Heart right ventricle (tissue), 16 donors: ENCODE measurements at regions of chr9 and their contacts with region 1.

Region 1: DNA sequence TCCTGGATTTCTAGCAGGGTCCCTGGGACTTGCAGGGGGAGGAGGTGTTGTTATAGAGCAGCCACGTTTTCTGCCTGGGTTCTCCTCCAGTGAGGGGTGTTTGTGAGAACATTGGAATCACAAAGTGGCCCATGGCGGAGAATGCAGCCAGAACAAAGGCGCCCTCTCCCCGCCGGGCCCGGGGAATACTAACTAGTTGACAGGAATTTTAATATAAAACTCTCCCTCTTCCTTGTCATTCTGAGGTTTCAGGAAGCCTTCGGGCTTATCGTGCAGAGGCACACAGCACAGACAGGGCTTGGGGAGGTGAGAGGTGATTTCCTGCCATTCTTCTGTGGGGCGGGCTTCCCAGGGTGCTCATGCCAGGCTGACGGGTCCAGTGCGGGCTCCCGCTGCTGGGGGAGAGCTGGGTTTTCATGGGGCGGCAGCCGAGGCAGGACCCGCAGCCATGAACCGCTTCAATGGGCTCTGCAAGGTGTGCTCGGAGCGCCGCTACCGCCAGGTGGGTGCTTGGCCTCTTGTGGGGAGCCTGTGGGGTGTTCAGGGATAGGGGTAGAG is 37.7 kb downstream of the RGS3 start:
- DNase-seq: peak; percentile 56 to 61
- ATAC-seq: peak; percentile 61 to 81 (median 74)
- H3K4me3 ChIP-seq: peak overlapping the region; percentile 23 to 66 (median 53)
- H3K27ac ChIP-seq: peak overlapping the region; percentile 60 to 96 (median 85)
- H3K4me1 ChIP-seq: peaks cover 15 to 60% (median 44%) of the 10 kb centered on the region in 9 donors
- H3K27me3 ChIP-seq: no peaks in the 10 kb centered on the region
- CTCF ChIP-seq: peak in 5 of 9 donors; percentile 7 to 35 (median 25)

Region 2: DNA sequence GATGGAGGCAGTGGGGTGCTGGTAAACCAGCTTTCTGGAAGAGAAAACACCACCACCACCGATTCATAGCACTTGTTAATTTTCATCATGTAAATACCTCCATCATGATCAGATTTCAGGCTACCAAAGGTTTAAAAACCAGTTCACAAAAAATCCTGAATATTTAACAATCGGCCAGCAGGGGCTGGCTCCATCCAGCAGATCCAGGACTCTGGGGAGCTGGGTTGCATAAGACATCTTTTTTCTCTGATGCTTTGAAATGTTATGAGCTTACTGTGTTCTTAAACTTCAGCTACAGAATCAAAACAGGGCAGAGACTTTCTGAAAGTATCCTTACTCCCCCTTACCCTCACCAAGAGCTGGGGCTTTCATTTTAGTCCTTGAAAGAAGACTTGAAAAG is 183.4 kb before region 1 on chr9:
- intact Hi-C with region 1: no loop called
- DNase-seq: no peak
- ATAC-seq: peak in 1 of 8 donors; percentile 42
- H3K4me3 ChIP-seq: no peak overlapping the region
- H3K27ac ChIP-seq: no peak overlapping the region
- H3K4me1 ChIP-seq: no peaks in the 10 kb centered on the region
- H3K27me3 ChIP-seq: no peaks in the 10 kb centered on the region
- CTCF ChIP-seq: peak in 3 of 9 donors; percentile 8 to 20 (median 12)

Region 3: DNA sequence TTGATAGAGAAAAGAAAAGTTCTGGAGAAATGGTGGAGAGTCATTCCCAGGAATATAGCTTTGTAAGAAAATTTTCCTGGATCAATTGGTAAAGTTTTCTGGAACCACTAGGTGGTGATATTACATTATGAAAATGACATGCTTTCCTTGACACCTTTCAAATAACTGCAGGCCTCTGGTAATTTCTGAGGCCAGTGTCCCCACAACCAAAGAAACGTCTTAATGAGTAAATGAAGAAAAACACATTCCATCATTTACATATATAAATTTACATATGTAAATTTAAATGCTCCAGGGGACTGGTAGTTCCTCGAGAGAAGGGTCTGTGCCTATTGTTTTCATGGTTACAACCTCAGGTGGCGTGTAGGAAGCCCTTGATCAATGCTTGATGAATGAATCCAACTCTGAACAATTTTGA is 54.9 kb before region 1 on chr9:
- intact Hi-C with region 1: loop called in 1 of 10 experiments (anchors 5 kb)
- DNase-seq: no peak
- ATAC-seq: peak; percentile 35 to 83 (median 71)
- H3K4me3 ChIP-seq: no peak overlapping the region
- H3K27ac ChIP-seq: peak overlapping the region in 6 of 10 donors; percentile 15 to 74 (median 40)
- H3K4me1 ChIP-seq: peaks cover 0 to 20% (median 7%) of the 10 kb centered on the region in 9 donors
- H3K27me3 ChIP-seq: no peaks in the 10 kb centered on the region
- CTCF ChIP-seq: peak; percentile 37 to 81 (median 71)

Region 4: DNA sequence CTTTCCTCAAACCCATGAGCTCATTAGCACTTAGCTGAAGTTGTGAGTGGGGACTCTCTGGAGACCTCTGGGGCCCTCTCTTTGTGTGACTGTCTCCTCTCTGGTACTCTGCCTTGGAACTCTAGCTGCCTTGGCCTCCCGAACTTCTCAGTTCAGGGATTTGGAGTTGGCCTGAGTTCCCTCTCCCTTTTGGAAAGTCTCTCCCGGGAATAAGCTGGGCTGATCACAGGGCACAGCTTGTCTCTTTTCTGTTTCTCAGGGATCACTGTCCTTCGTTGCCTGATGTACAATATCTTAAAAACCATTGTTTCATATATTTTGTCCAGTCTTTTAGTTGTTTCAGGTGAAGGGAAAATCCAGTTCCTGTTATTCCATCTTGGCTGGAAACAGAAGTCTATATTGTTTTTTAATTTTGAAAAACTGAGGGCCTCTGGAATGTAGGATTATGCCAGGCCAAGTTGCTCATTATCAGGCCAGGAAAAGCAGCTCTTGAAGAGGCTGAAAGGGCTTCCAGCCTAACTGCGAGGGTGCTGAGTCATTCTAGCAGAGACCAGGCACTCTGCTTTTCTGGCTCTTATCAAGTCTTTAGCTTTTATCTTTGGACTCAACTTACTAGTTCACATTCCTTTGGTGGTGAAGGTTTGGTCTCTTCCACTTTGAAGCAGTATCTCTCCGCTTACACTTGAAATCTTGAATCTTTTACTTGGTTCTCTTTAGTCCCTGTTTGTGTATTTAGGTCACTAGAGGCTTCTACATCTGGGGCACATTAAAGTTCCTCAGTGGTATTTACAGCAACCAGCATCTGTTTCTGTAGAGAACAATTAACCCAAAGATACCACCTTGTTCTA is 46.1 kb before region 1 on chr9:
- intact Hi-C with region 1: loop called in 4 of 10 experiments (anchors 5 kb)
- DNase-seq: peak in 1 of 2 donors; percentile 68
- ATAC-seq: peak; percentile 89 to 97 (median 96)
- H3K4me3 ChIP-seq: no peak overlapping the region
- H3K27ac ChIP-seq: peak overlapping the region; percentile 71 to 98 (median 90)
- H3K4me1 ChIP-seq: peaks cover 21 to 47% (median 32%) of the 10 kb centered on the region in 9 donors
- H3K27me3 ChIP-seq: no peaks in the 10 kb centered on the region
- CTCF ChIP-seq: no peak

Region 5: DNA sequence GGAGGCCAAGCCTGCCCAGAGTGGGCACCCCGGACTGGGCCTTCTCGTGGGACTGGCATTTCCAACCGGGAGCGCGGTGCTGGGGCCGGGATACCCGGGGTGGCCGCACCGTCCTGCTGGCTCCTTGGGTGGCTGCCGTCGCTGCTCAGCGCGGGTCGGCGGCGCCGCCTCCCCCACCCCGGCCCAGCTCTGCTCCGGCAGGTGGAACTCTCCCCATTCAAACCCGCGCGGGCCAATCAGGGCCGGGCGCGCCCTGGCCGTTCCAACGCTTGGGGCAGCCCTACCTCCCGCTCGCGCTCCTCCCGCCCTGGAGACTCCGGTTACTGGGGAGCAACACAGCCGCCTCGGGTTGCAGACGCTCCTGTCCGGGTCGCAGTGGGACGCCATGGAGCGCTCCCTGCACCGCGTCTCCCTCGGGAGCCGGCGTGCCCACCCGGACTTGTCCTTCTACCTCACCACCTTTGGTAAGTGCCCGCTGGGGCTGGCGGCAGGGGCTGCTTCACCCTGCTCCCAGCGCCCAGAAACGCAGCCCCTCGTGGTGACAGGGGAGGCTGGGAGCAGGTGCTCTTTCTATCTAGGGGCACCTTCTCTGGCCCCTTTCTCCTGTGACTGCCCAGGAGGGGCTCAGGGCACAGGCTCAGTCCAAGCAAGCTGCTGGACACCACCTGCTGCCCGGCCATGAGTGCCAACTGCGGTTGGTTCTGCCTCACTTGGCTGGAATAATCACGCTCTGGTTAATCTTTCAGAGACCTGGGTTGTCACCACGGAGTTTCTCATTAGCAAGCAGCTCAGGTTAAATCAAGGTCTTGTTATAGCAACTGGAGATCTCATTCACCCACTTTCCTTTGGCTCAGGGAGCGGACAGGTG is 37.6 kb before region 1 on chr9 and contains the start of gene RGS3:
- intact Hi-C with region 1: loop called in 4 of 10 experiments (anchors 5 kb)
- DNase-seq: peak; percentile 63 to 69
- ATAC-seq: peak; percentile 90 to 97 (median 95)
- H3K4me3 ChIP-seq: peak within 1 kb of the TSS in 9 of 10 donors; percentile 27 to 59 (median 48)
- H3K27ac ChIP-seq: peak within 1 kb of the TSS; percentile 55 to 91 (median 72)
- H3K4me1 ChIP-seq: peaks cover 0 to 25% (median 9%) of the 10 kb centered on the region in 9 donors
- H3K27me3 ChIP-seq: peaks cover 0 to 11% (median 0%) of the 10 kb centered on the region in 7 donors
- CTCF ChIP-seq: peak in 3 of 9 donors; percentile 30 to 44 (median 31)
- total RNA-seq, gene RGS3: 98.7 to 201 (median 140) TPM

Region 6: DNA sequence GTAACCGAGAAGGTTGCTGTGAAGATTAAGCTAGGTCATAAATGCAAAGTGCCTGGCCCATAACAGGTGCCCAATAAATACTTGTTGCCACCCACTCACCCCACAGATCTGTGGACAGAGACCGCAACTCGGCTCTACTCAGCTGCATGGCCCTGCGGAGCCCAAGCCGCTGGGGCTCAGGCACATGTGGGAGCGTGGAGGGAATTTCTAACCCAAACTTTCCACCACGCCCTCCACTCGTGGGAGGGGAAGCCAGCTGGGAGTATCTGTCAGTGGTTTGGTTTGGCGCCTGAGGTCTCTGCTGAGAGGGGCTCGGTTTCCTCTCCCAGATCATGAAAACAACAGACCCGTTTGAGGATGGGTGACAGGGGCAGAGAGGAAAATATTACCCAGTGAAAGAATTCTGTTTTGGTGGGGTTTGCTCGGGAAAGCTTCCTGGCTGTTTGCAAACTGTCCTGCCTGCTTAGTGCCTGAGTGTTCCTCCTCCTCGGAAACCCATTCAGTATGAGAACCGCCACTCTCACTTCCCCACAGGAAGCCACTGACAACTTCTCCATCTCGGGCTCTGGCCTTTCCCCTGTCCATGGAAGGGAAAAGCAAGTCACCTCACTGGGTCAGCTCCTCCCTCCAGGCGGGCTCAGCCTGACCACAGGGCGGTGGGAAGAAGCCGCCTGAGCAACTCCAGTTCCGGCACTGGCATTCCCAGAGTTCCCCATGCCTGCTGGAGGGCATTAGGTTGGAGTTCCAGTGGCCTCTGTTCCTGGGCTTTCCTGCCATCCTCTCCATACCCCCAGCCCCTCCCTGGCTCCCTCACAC is 22.4 kb after region 1 on chr9:
- intact Hi-C with region 1: loop called in 1 of 10 experiments (anchors 1 kb)
- DNase-seq: peak; percentile 63 to 75
- ATAC-seq: peak; percentile 50 to 76 (median 60)
- H3K4me3 ChIP-seq: peak overlapping the region in 5 of 10 donors; percentile 1 to 12 (median 9)
- H3K27ac ChIP-seq: peak overlapping the region; percentile 65 to 87 (median 79)
- H3K4me1 ChIP-seq: peaks cover 47 to 100% (median 88%) of the 10 kb centered on the region in 9 donors
- H3K27me3 ChIP-seq: no peaks in the 10 kb centered on the region
- CTCF ChIP-seq: no peak

Region 7: GRCh38 chr9:113548221-113549041 is 47.2 kb after region 1 on chr9:
- intact Hi-C with region 1: loop called in 1 of 10 experiments (anchors 1 kb)
- DNase-seq: peak; percentile 73 to 79
- ATAC-seq: peak; percentile 85 to 95 (median 92)
- H3K4me3 ChIP-seq: peak overlapping the region in 1 of 10 donors; percentile 0
- H3K27ac ChIP-seq: peak overlapping the region; percentile 70 to 91 (median 84)
- H3K4me1 ChIP-seq: peaks cover 15 to 73% (median 52%) of the 10 kb centered on the region in 9 donors
- H3K27me3 ChIP-seq: no peaks in the 10 kb centered on the region
- CTCF ChIP-seq: no peak

Region 8: DNA sequence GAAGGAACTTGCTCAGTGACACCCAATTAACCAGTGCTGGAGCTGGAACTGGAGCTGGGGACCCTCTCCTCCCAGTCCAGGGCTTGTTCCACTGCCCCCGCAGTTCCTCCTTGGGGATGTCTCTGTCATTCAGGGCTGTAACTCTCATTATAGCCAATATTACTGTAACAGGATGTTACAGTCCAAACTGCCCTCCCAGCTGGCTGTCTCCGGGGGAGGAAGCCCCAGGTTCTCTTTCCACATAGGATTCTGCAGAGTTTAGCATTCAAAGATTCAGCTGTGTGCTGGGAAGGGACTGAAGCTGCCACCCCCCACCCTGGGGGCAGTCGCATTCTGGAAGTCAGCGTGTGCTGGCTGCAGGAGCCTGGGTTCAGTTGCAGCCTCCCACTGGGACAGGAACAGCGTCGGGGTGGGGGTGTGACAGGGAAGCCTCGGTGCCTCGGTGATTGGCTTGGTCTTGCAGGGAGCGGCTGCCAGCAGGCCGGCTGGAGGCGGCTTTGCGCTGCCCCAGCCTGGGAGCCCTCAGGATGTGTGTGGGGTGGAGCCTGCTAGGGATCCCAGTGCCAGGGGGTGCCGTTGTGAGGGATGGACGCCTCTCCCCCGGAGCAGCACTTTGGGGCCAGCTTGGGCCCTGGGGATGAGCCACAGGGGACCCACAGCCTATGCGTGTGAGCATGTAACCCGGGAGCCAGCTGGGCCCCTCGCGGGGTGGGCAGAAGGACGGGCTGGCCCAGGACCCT is 63.5 kb after region 1 on chr9:
- intact Hi-C with region 1: loop called in 1 of 10 experiments (anchors 2 kb)
- DNase-seq: peak; percentile 73 to 79
- ATAC-seq: peak; percentile 70 to 87 (median 83)
- H3K4me3 ChIP-seq: peak overlapping the region; percentile 4 to 61 (median 48)
- H3K27ac ChIP-seq: peak overlapping the region; percentile 68 to 99 (median 86)
- H3K4me1 ChIP-seq: peaks cover 21 to 90% (median 72%) of the 10 kb centered on the region in 9 donors
- H3K27me3 ChIP-seq: no peaks in the 10 kb centered on the region
- CTCF ChIP-seq: no peak